MCF 10A (cell line): ENCODE measurements at regions of chr12 and their contacts with region 1.

Region 1: DNA sequence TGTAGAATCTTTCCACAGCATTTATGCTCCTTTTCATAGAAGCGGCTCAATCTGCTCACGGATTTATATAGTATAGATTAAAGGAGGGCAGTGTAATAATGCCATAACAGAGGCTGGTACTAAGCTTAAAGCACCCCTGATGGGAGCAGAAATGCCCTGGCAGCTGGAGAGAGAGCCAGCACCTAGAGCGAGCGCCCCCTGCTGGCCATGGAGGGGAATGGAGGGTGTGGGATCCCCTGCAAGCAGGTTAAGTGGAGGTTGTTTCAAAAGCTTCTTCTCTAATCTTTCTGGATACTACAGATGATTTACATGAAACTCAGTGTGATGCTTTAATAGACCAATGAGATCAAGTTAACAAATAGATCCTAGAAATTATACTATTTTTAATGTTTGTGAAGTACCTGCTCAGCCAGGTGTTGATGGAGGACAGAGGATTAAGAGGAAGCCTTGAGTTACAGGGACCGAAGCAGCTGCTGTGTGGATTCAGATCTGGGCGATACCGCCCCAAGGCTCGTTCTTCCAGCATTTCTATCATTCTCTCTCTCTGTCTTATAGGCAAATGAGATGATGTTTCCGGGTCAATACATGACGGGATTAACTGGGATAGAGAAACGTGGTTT is 1519.3 kb upstream of the TMEM132C start:
- DNase-seq: peak; percentile 70
- H3K4me3 Mint-ChIP-seq: no peak overlapping the region
- H3K27ac Mint-ChIP-seq: no peak overlapping the region
- H3K4me1 Mint-ChIP-seq: no peaks in the 10 kb centered on the region
- H3K27me3 Mint-ChIP-seq: no peaks in the 10 kb centered on the region
- CTCF ChIP-seq: peak; percentile 94

Region 2: DNA sequence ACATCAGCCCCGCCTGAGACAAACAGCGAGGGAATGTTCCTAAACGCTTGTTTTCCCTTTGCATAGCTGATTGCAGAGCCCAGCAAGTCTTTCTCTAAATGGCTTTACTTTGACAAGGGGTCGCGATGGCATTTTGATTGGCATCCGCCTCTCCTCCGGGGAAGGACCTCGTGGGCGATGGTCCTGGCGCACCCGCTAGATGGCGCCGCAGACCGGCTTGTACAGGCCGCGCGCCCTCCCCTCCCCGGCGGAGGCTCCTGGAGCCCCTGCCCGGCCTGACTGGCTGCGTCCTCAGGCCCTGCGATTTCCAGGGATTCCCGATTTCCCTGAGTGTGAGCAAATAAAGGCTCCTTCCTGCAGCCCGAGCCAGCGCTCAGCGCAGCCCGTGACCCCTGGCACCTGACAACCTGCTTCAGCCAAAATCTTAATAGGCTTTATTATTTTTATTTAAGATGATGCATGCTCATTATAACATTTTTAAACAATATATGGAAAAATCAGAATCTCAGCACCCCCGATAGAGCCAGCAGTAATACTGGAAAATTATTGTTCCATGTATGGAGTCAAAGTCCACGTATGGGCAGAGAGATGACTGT is 1214.1 kb before region 1 on chr12:
- CTCF ChIA-PET with region 1: interaction called, 5 read pairs
- POLR2A ChIA-PET with region 1: no interaction called
- intact Hi-C with region 1: loop called (anchors 5 kb)
- DNase-seq: peak; percentile 34
- H3K4me3 Mint-ChIP-seq: no peak overlapping the region
- H3K27ac Mint-ChIP-seq: no peak overlapping the region
- H3K4me1 Mint-ChIP-seq: no peaks in the 10 kb centered on the region
- H3K27me3 Mint-ChIP-seq: no peaks in the 10 kb centered on the region
- CTCF ChIP-seq: peak; percentile 90

Region 3: GRCh38 chr12:126076515-126076914 is 671.1 kb before region 1 on chr12:
- CTCF ChIA-PET with region 1: interaction called, 19 read pairs
- POLR2A ChIA-PET with region 1: no interaction called
- intact Hi-C with region 1: no loop called
- DNase-seq: no peak
- H3K4me3 Mint-ChIP-seq: no peak overlapping the region
- H3K27ac Mint-ChIP-seq: no peak overlapping the region
- H3K4me1 Mint-ChIP-seq: no peaks in the 10 kb centered on the region
- H3K27me3 Mint-ChIP-seq: no peaks in the 10 kb centered on the region
- CTCF ChIP-seq: no peak

Region 4: DNA sequence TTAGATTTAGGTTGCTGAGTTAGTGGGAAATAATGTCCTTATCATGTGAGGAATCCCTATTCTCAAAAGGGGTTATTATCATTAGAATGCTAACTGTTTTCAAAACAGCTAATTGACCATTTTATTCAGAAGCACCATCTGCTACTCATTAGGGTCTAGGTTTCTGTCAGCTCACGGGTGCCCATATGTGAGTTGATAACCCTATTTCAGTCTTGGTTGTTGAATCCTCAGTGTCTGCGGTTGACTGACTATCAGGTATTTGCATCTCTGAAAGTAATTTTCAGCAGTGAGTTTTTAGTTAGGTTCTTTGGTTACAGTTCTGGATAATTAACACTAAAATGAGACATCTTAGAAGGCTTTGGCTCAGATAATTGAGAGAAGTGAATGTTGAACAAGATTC is 278.4 kb before region 1 on chr12:
- CTCF ChIA-PET with region 1: no interaction called
- POLR2A ChIA-PET with region 1: no interaction called
- intact Hi-C with region 1: loop called (anchors 2 kb)
- DNase-seq: no peak
- H3K4me3 Mint-ChIP-seq: no peak overlapping the region
- H3K27ac Mint-ChIP-seq: no peak overlapping the region
- H3K4me1 Mint-ChIP-seq: peaks cover 2% of the 10 kb centered on the region
- H3K27me3 Mint-ChIP-seq: no peaks in the 10 kb centered on the region
- CTCF ChIP-seq: no peak

Region 5: DNA sequence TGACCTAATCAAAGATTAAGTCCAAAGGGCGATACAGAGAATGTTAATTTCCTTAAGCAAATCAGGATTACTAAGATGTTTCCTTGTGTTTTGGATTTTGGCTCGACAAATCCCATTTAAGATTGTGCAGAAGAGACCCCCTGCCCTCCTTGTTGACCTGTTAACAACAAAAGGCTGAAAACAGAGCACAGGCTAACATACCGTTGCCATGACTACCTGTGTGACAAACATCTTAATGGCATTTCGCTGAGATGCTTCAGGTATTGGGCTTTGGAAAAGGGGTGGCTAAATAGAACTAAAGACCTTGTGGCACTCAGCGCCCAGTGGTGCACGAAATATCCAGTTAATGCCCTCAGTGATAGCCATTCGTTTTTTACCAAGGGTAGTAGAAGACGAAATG is 12.9 kb before region 1 on chr12:
- CTCF ChIA-PET with region 1: interaction called, 34 read pairs
- POLR2A ChIA-PET with region 1: no interaction called
- intact Hi-C with region 1: no loop called
- DNase-seq: no peak
- H3K4me3 Mint-ChIP-seq: no peak overlapping the region
- H3K27ac Mint-ChIP-seq: no peak overlapping the region
- H3K4me1 Mint-ChIP-seq: no peaks in the 10 kb centered on the region
- H3K27me3 Mint-ChIP-seq: no peaks in the 10 kb centered on the region
- CTCF ChIP-seq: no peak

Region 6: GRCh38 chr12:126784328-126784921 is 36.8 kb after region 1 on chr12:
- CTCF ChIA-PET with region 1: interaction called, 15 read pairs
- POLR2A ChIA-PET with region 1: no interaction called
- intact Hi-C with region 1: no loop called
- DNase-seq: peak; percentile 64
- H3K4me3 Mint-ChIP-seq: no peak overlapping the region
- H3K27ac Mint-ChIP-seq: no peak overlapping the region
- H3K4me1 Mint-ChIP-seq: no peaks in the 10 kb centered on the region
- H3K27me3 Mint-ChIP-seq: peaks cover 28% of the 10 kb centered on the region
- CTCF ChIP-seq: peak; percentile 70

Region 7: DNA sequence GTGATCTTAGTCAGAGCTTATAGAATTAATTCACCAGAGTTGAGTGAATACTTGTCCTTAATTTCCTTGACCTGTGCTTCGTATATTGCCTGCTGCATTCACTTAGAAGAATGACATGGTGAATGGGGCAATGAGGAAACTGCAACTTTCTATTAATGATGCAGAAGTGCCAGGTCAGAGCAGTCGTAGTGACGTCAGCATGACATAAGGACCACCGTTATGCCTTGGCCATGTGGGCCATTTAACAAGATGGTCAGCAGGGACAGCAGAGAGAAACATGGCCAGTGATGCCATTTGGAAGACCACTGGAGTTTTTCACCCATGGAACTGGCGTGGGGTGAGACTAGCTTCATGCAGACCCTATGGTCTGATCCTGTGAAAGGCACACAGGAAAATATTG is 49.9 kb after region 1 on chr12:
- CTCF ChIA-PET with region 1: no interaction called
- POLR2A ChIA-PET with region 1: no interaction called
- intact Hi-C with region 1: no loop called
- DNase-seq: no peak
- H3K4me3 Mint-ChIP-seq: no peak overlapping the region
- H3K27ac Mint-ChIP-seq: no peak overlapping the region
- H3K4me1 Mint-ChIP-seq: no peaks in the 10 kb centered on the region
- H3K27me3 Mint-ChIP-seq: no peaks in the 10 kb centered on the region
- CTCF ChIP-seq: no peak